Caco-2 (cell line): ENCODE measurements at regions of chr2 and their contacts with region 1.

Region 1: GRCh38 chr2:192162392-192163042 is 32.2 kb downstream of the TMEFF2 start:
- DNase-seq: peak; percentile 58 to 79
- H3K4me3 ChIP-seq: no peak overlapping the region
- H3K4me3 Mint-ChIP-seq: no peak overlapping the region
- H3K27ac Mint-ChIP-seq: no peak overlapping the region
- H3K4me1 ChIP-seq: peaks cover 4% of the 10 kb centered on the region; the same call in 1 of the 2 replicates
- H3K4me1 Mint-ChIP-seq: no peaks in the 10 kb centered on the region
- H3K27me3 ChIP-seq: no peaks in the 10 kb centered on the region; the same call in 1 of the 2 replicates
- H3K27me3 Mint-ChIP-seq: peaks cover 15% of the 10 kb centered on the region
- CTCF ChIP-seq: peak; percentile 89 to 93

Region 2: DNA sequence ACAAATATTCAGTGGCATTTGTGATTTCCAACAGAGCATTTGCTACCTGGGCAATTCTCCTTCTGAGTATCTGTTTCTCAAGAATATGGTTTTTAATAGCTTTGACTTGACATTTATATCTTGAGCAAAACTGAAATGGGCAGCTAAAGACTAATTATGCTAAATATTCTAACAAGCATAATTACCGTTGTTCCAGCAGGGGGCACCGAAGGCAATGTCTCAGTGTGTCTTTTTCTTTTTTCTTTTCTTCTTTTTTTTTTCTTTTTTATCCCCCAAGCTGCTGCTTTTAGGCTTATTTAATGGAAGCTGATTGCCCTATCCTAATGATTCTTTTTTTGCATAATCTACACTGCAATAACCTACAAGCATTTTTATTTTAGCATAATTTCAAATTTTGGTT is 623.4 kb before region 1 on chr2:
- CTCF ChIA-PET with region 1: interaction called, 6 read pairs
- POLR2A ChIA-PET with region 1: no interaction called
- intact Hi-C with region 1: loop called (anchors 1 kb)
- DNase-seq: peak in 1 of 2 experiments; percentile 43
- H3K4me3 ChIP-seq: no peak overlapping the region
- H3K4me3 Mint-ChIP-seq: no peak overlapping the region
- H3K27ac Mint-ChIP-seq: no peak overlapping the region
- H3K4me1 ChIP-seq: no peaks in the 10 kb centered on the region
- H3K4me1 Mint-ChIP-seq: peaks cover 4% of the 10 kb centered on the region
- H3K27me3 ChIP-seq: no peaks in the 10 kb centered on the region
- H3K27me3 Mint-ChIP-seq: no peaks in the 10 kb centered on the region
- CTCF ChIP-seq: peak; percentile 61 to 62

Region 3: DNA sequence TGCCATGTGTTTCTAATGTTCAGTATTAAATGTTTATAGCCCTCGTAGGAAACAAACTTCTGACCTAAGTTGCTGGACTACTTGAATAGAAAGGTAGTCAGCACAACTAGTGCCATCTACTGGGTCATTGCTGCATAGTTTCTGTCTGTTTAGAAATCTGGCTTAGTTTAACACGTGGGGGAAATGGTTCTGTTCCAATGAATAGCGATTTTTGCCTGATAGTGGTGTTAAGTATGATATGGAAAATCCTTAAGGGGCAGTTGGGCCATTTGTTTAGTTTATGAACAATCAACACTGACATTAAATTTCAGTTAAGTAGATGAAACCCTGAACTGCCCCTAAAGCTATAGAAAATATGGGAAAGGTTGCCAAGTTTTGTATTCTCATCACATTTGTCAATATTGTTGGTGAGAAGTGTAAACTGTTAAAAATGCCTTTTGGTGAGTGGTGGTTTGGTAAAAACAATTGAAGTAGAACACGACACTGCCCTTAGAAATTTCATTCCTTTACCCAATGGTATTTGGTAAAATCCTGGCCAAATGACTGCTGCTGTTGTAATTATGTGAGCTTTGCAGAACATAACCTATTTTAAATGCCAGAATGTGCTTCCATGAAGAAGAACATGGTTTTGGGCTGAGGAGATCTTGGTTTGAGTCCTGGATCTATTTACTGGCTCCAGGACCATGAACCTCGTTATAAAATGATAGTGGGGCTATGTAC is 471.3 kb before region 1 on chr2:
- CTCF ChIA-PET with region 1: no interaction called
- POLR2A ChIA-PET with region 1: no interaction called
- intact Hi-C with region 1: loop called (anchors 2 kb)
- DNase-seq: peak; percentile 56 to 70
- H3K4me3 ChIP-seq: no peak overlapping the region
- H3K4me3 Mint-ChIP-seq: peak overlapping the region; percentile 52
- H3K27ac Mint-ChIP-seq: peak overlapping the region; percentile 53
- H3K4me1 ChIP-seq: peaks cover 62% of the 10 kb centered on the region
- H3K4me1 Mint-ChIP-seq: peaks cover 44% of the 10 kb centered on the region
- H3K27me3 ChIP-seq: no peaks in the 10 kb centered on the region
- H3K27me3 Mint-ChIP-seq: no peaks in the 10 kb centered on the region
- CTCF ChIP-seq: peak; percentile 72 to 82

Region 4: GRCh38 chr2:191811807-191812602 is 350.5 kb before region 1 on chr2:
- CTCF ChIA-PET with region 1: interaction called, 89 read pairs
- POLR2A ChIA-PET with region 1: no interaction called
- intact Hi-C with region 1: loop called (anchors 1 kb)
- DNase-seq: peak; percentile 58 to 70
- H3K4me3 ChIP-seq: no peak overlapping the region
- H3K4me3 Mint-ChIP-seq: no peak overlapping the region
- H3K27ac Mint-ChIP-seq: no peak overlapping the region
- H3K4me1 ChIP-seq: no peaks in the 10 kb centered on the region
- H3K4me1 Mint-ChIP-seq: no peaks in the 10 kb centered on the region
- H3K27me3 ChIP-seq: no peaks in the 10 kb centered on the region
- H3K27me3 Mint-ChIP-seq: no peaks in the 10 kb centered on the region
- CTCF ChIP-seq: peak; percentile 79 to 82

Region 5: DNA sequence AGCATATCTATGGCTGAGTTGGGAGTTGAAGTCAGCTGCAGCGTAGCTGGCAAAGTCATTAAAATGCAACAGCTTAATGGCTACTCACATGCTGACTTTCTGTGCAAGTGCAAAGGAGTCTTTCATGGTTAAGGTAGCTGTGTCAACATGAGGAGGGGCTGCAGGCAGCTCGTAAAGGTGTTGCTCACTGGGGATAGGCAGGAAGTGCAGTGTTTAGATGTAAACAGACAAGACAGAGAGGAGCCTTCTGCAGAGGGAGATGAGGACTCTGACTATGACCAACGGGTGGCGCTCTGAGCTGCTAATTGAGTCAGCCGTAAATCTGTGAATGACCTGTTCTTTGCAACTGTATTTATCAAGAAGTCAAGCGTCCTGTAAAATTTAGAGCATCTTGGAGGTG is 293.3 kb before region 1 on chr2:
- CTCF ChIA-PET with region 1: interaction called, 10 read pairs
- POLR2A ChIA-PET with region 1: no interaction called
- intact Hi-C with region 1: loop called (anchors 1 kb)
- DNase-seq: peak in 1 of 2 experiments; percentile 26
- H3K4me3 ChIP-seq: no peak overlapping the region
- H3K4me3 Mint-ChIP-seq: no peak overlapping the region
- H3K27ac Mint-ChIP-seq: no peak overlapping the region
- H3K4me1 ChIP-seq: peaks cover 21% of the 10 kb centered on the region
- H3K4me1 Mint-ChIP-seq: peaks cover 18% of the 10 kb centered on the region
- H3K27me3 ChIP-seq: no peaks in the 10 kb centered on the region
- H3K27me3 Mint-ChIP-seq: no peaks in the 10 kb centered on the region
- CTCF ChIP-seq: peak; percentile 15 to 22